ENCODE measurements at regions of chr6 and their contacts with region 1.

Region 1: GRCh38 chr6:82980086-82980485 is 85.6 kb downstream of the UBE3D start:
- DNase-seq: no peak

Region 2: DNA sequence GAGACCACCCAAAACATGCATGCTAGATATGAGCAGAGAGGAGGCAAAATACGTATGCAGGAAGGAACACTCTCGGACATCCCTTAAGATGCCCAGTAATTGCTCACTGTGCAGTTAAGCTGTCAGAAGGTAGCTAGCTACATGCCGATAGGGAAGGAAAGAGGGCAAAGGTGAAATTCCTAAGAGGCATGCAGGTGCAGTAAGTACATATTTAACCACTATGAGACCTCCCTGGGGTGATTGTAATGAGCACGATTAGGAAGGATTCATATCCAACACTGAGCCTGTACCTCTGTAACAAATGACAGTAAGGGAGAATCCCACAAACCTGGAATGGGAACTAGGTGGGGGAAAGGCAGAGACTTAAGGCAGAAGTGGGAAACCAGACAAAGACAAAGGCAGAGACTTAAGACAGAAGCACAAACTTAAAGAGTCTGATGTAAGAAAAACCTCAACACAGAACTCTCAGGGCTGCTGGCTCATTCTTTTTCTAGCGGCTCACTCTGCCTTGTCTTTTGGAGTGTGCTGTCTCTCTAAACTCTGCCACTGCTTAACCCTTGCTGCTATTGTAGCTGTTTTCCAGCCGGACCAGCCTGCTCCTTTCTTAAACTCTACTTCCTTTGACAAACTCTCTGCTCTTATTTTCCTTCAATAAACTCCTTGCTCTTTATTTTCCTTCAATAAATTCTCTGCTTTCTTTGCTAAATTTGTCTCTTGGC is 62.6 kb before region 1 on chr6:
- intact Hi-C with region 1: loop called in 1 of 2 experiments (anchors 2 kb)
- DNase-seq: no peak

Region 3: GRCh38 chr6:82995066-82995465 is 15.0 kb after region 1 on chr6:
- intact Hi-C with region 1: no loop called
- DNase-seq: no peak

Region 4: GRCh38 chr6:84356907-84357306 is 1376.8 kb after region 1 on chr6:
- intact Hi-C with region 1: no loop called
- DNase-seq: no peak